Heart right ventricle (tissue), 16 donors: ENCODE measurements at regions of chr22 and their contacts with region 1.

Region 1: GRCh38 chr22:29837780-29838598 is at the start of gene ASCC2:
- DNase-seq: peak; percentile 99
- ATAC-seq: peak; percentile 97 to 100 (median 100)
- H3K4me3 ChIP-seq: peak within 1 kb of the TSS; percentile 50 to 97 (median 84)
- H3K27ac ChIP-seq: peak within 1 kb of the TSS; percentile 9 to 93 (median 83)
- H3K4me1 ChIP-seq: peaks cover 9 to 55% (median 32%) of the 10 kb centered on the region in 9 donors
- H3K27me3 ChIP-seq: no peaks in the 10 kb centered on the region
- CTCF ChIP-seq: peak in 3 of 9 donors; percentile 3 to 13 (median 7)
- total RNA-seq, gene ASCC2: 26.6 to 42.1 (median 33.1) TPM

Region 2: GRCh38 chr22:29663180-29663821 is 174.7 kb before region 1 on chr22:
- intact Hi-C with region 1: no loop called
- DNase-seq: no peak
- ATAC-seq: no peak
- H3K4me3 ChIP-seq: no peak overlapping the region
- H3K27ac ChIP-seq: no peak overlapping the region
- H3K4me1 ChIP-seq: peaks cover 0 to 10% (median 0%) of the 10 kb centered on the region in 9 donors
- H3K27me3 ChIP-seq: no peaks in the 10 kb centered on the region
- CTCF ChIP-seq: no peak

Region 3: DNA sequence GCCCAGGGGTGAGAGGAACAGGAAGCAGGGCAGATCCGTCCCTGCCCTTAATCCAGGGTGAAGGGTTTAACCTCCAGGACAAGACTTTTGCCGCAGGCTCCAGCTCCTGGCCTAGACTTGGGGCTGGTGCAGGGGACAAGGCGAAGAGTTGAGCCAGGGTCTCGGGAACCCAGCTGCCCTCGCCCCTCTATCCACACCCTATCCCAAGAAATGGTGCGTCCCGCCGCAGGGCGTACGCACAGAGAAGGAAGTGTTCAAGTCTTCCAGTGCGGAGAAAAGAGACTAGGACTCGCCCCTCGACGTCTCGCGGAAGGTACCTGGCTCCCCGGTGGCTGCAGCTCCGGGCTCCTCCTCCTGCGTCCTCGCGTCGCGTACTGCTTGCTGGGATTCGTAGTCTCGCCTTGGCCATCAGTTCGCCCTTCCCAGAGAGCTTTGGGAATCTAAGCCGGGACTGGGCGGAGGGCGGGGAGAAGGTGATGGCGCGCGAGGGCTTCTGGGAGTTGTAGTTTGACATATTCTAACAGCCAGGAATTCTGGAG is 71.3 kb before region 1 on chr22 and contains the start of gene ZMAT5:
- intact Hi-C with region 1: loop called in 2 of 10 experiments (anchors 5 to 10 kb)
- DNase-seq: peak; percentile 91 to 95
- ATAC-seq: peak; percentile 96 to 99 (median 99)
- H3K4me3 ChIP-seq: peak within 1 kb of the TSS; percentile 54 to 97 (median 86)
- H3K27ac ChIP-seq: peak within 1 kb of the TSS; percentile 89 to 97 (median 94)
- H3K4me1 ChIP-seq: peaks cover 6 to 45% (median 31%) of the 10 kb centered on the region in 9 donors
- H3K27me3 ChIP-seq: no peaks in the 10 kb centered on the region
- CTCF ChIP-seq: no peak
- total RNA-seq, gene ZMAT5: 15.1 to 23.9 (median 19.3) TPM

Region 4: DNA sequence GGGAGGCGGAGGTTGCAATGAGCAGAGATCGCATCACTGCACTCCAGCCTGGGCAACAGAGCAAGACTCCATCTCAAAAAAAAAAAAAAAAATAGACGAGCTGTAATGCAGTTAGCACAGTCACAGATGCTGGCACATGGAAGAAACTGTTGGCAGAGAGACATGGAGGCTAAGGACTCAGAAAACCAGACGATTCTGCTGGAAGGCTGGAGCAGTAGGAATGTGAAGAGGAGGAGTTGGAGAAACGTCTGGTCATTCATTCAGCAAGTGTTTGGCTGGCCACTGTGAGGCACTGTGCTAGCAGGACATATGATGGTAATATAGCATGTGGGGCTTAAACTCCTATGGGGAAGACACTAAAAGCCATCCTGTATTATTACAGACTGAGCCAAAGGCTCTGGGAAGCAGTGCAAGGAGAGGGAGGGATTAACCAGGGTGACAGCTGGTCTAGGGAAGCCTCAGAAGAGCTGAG is 65.8 kb before region 1 on chr22:
- intact Hi-C with region 1: loop called in 2 of 10 experiments (anchors 5 to 10 kb)
- DNase-seq: no peak
- ATAC-seq: peak in 2 of 8 donors; percentile 7 to 30
- H3K4me3 ChIP-seq: no peak overlapping the region
- H3K27ac ChIP-seq: peak overlapping the region in 1 of 10 donors; percentile 21
- H3K4me1 ChIP-seq: peaks cover 3 to 36% (median 25%) of the 10 kb centered on the region in 9 donors
- H3K27me3 ChIP-seq: no peaks in the 10 kb centered on the region
- CTCF ChIP-seq: peak in 4 of 9 donors; percentile 38 to 43 (median 40)

Region 5: DNA sequence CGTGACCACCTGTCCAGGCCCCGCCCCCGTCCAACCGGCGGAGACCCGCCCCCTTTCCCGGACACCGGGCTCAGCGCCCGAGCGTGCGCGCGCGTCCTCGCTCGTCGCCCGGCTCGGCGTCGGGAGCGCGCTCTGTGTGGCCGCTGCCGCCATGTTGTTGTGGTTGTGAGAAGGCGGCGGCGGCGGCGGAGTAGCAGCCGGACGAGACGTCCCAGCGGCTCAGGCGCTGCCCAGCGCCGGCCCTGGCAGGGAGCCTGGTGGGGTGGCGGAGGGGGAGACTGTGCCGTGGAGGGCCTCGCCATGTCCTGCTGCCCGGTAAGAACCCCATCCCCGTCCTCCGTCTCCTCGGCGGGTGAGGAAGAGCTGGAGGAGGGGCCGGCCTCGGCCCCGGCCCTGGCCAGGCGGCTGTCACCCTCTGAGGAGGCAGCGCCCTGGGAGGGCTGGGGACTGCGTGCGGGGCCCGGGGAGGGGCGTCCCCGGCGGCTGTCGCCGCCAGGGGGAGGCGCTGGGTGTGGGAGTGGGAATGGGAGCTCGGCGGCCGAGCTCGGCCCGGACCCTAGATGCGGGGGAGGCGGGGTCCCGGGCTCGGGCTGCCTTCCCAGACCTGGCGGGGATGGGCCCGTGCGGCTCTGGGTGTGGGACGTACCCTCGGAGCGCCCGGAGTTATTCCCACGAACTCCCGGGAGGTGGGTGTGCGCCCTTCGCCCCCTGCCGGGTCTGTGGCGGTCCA is 45.2 kb after region 1 on chr22 and contains the start of gene MTMR3:
- intact Hi-C with region 1: loop called in 1 of 10 experiments (anchors 1 kb)
- DNase-seq: peak; percentile 94 to 96
- ATAC-seq: peak; percentile 90 to 97 (median 94)
- H3K4me3 ChIP-seq: peak within 1 kb of the TSS; percentile 68 to 99 (median 95)
- H3K27ac ChIP-seq: peak within 1 kb of the TSS; percentile 86 to 100 (median 98)
- H3K4me1 ChIP-seq: peaks cover 11 to 50% (median 46%) of the 10 kb centered on the region in 9 donors
- H3K27me3 ChIP-seq: no peaks in the 10 kb centered on the region
- CTCF ChIP-seq: peak in 8 of 9 donors; percentile 8 to 70 (median 54)
- total RNA-seq, gene MTMR3: 26.1 to 42.9 (median 36.5) TPM

Region 6: GRCh38 chr22:29994027-29994715 is 156.2 kb after region 1 on chr22:
- intact Hi-C with region 1: loop called in 1 of 10 experiments (anchors 10 kb)
- DNase-seq: no peak
- ATAC-seq: no peak
- H3K4me3 ChIP-seq: no peak overlapping the region
- H3K27ac ChIP-seq: peak overlapping the region in 1 of 10 donors; percentile 50
- H3K4me1 ChIP-seq: peaks cover 0 to 43% (median 12%) of the 10 kb centered on the region in 9 donors
- H3K27me3 ChIP-seq: no peaks in the 10 kb centered on the region
- CTCF ChIP-seq: peak in 1 of 9 donors; percentile 10